CD8-positive, alpha-beta T cell (primary cell): ENCODE measurements at regions of chr6 and their contacts with region 1.

Region 1: DNA sequence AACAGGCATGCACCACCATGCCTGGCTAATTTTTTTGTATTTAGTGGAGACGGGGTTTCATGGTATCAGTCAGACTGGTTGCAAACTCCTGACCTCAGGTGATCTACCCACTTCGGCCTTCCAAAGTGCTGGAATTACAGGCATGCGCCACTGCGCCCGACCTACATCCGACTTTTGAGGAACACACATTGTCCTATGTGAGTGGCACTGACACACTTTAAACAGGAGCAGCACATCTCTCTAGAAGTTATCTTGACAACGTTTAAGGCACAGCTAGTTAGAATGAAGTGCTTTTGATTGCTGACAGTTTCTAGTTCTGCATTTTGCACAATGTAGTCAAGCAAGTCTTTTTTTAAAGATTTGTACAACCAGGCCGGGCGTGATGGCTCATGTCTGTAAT is 26.7 kb downstream of the NEDD9 start:
- DNase-seq: no peak
- ATAC-seq: no peak
- H3K4me3 ChIP-seq: no peak overlapping the region
- H3K4me3 Mint-ChIP-seq: no peak overlapping the region
- H3K27ac ChIP-seq: no peak overlapping the region
- H3K27ac Mint-ChIP-seq: no peak overlapping the region
- H3K4me1 ChIP-seq: peaks cover 9% of the 10 kb centered on the region
- H3K4me1 Mint-ChIP-seq: peaks cover 39% of the 10 kb centered on the region
- H3K27me3 ChIP-seq: no peaks in the 10 kb centered on the region
- H3K27me3 Mint-ChIP-seq: no peaks in the 10 kb centered on the region
- CTCF ChIP-seq: no peak

Region 2: GRCh38 chr6:11277275-11278206 is 71.8 kb after region 1 on chr6:
- CTCF ChIA-PET with region 1: no interaction called
- POLR2A ChIA-PET with region 1: no interaction called
- intact Hi-C with region 1: loop called in 1 of 2 experiments (anchors 2 kb)
- DNase-seq: peak in 2 of 9 experiments; percentile 56 to 69
- ATAC-seq: peak; percentile 50
- H3K4me3 ChIP-seq: no peak overlapping the region
- H3K4me3 Mint-ChIP-seq: peak overlapping the region; percentile 12
- H3K27ac ChIP-seq: peak overlapping the region in 1 of 2 experiments; percentile 37
- H3K27ac Mint-ChIP-seq: peak overlapping the region; percentile 70
- H3K4me1 ChIP-seq: peaks cover 19% of the 10 kb centered on the region
- H3K4me1 Mint-ChIP-seq: peaks cover 40% of the 10 kb centered on the region
- H3K27me3 ChIP-seq: no peaks in the 10 kb centered on the region
- H3K27me3 Mint-ChIP-seq: no peaks in the 10 kb centered on the region
- CTCF ChIP-seq: no peak